K562 (cell line): ENCODE measurements at regions of chr1 and their contacts with region 1.

Region 1: GRCh38 chr1:202160377-202160940 is at the start of gene PTPN7:
- DNase-seq: peak; percentile 57 to 75 (median 68)
- ATAC-seq: peak; percentile 2; the same call in 1 of the 3 replicates
- H3K4me3 ChIP-seq: peak within 1 kb of the TSS; percentile 57
- H3K27ac ChIP-seq: peak within 1 kb of the TSS; percentile 99
- H3K4me1 ChIP-seq: peaks cover 81 to 87% of the 10 kb centered on the region in 2 experiments
- H3K27me3 ChIP-seq: no peaks in the 10 kb centered on the region
- CTCF ChIP-seq: peak; percentile 22 to 26 (median 25); a peak in 3 of 6 replicates
- EP300 ChIP-seq: no peak
- POLR2A ChIP-seq: no peak
- RAD21 ChIP-seq: peak in 1 of 2 experiments; percentile 25; a peak in 1 of 4 replicates
- polyA plus RNA-seq, gene PTPN7: 18.7 to 19.8 TPM

Region 2: DNA sequence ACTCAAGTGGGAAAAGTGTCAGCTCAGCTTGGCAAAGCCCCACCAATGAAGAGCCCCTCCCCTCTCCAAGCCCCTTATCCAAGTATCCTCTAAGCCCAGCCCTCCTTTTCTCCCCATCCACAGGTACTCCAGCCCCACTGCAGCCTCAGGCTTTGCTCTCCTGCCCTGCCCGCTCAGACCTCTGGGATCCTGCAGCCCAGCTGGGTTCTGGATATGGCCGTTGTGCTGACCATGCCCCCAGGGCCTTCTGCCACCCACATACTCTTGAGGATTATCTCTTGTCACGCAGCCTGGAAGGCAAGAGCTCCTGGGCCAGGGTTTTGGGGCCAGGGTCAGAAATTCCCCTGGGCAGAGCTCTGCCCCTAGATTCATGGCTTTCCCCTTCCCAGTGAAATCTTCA is 267.0 kb before region 1 on chr1:
- CTCF ChIA-PET with region 1: no interaction called
- POLR2A ChIA-PET with region 1: no interaction called
- in situ Hi-C with region 1: no loop called
- intact Hi-C with region 1: no loop called
- DNase-seq: no peak
- ATAC-seq: no peak
- H3K4me3 ChIP-seq: no peak overlapping the region
- H3K27ac ChIP-seq: no peak overlapping the region
- H3K4me1 ChIP-seq: peaks cover 3 to 15% of the 10 kb centered on the region in 2 experiments; a peak in 3 of 5 replicates
- H3K27me3 ChIP-seq: peaks cover 0 to 8% of the 10 kb centered on the region in 2 experiments; a peak in 1 of 5 replicates
- CTCF ChIP-seq: no peak
- EP300 ChIP-seq: no peak
- POLR2A ChIP-seq: no peak
- RAD21 ChIP-seq: no peak

Region 3: DNA sequence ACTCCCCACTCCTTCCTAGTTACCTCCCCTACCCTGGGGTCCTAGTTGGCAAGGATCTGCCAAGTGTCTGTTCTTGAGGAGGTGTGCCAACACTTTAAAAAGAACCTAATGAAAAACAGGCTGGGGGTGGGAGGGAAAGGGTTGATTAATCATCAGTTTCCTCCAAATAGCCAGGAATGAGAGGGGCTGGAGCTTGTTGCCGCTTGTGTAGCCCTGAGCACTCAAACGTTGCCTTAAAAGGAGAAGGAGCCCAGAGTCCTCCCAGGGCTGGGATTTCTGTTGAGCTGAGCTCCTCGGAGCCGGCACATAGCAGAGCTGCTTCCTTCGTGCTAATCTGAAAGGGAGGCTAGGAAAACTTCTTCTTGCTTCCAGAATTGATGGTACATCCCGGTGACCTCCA is 255.9 kb before region 1 on chr1:
- CTCF ChIA-PET with region 1: no interaction called
- POLR2A ChIA-PET with region 1: no interaction called
- in situ Hi-C with region 1: no loop called
- intact Hi-C with region 1: no loop called
- DNase-seq: no peak
- ATAC-seq: no peak
- H3K4me3 ChIP-seq: no peak overlapping the region
- H3K27ac ChIP-seq: no peak overlapping the region
- H3K4me1 ChIP-seq: peaks cover 0 to 2% of the 10 kb centered on the region in 2 experiments; a peak in 2 of 5 replicates
- H3K27me3 ChIP-seq: peaks cover 0 to 12% of the 10 kb centered on the region in 2 experiments; a peak in 3 of 5 replicates
- CTCF ChIP-seq: no peak
- EP300 ChIP-seq: no peak
- POLR2A ChIP-seq: no peak
- RAD21 ChIP-seq: no peak

Region 4: DNA sequence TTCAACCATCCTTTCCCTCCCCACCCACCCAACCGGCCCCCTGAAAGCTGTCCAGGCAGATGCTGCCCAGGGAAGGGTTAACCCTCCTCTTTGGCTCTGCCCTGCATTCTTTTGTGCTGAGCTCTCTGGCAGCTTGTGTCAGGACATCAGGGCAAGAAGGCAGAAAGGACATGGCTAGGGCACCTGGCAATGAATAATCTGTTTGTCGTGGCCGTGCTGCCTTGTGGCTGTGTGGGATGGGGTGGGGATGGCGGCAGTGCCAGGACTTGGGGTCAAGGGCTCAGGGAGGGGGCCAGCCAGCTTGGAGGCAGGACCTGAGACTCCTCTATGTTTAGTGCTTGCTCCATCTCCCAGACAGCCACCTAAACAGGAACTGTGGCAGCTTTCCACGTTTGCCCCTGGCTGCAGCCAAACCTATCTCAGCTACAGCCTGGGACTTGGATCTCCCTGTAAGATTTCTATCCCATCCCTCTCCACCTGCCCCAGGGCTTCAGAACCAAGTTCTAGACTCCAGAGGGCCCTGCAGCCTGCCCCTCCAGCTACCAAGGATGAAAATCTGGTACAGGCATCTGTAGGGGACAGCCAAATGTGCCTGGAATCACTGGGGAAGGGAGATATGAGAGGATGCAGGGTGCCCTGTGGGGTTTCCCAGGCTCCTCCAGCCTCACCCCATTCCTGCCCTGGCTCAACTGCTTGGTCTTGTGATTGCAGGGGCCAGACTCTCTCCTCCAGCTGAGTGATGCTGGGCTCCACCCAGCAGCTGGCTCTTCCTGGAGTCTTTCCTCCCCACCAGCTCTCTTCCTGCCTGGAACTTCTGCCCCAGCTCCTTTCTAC is 47.4 kb before region 1 on chr1:
- CTCF ChIA-PET with region 1: no interaction called
- POLR2A ChIA-PET with region 1: no interaction called
- in situ Hi-C with region 1: no loop called
- intact Hi-C with region 1: no loop called
- DNase-seq: no peak
- ATAC-seq: no peak
- H3K4me3 ChIP-seq: no peak overlapping the region
- H3K27ac ChIP-seq: no peak overlapping the region
- H3K4me1 ChIP-seq: peaks cover 5 to 10% of the 10 kb centered on the region in 2 experiments; a peak in 4 of 5 replicates
- H3K27me3 ChIP-seq: peaks cover 3 to 14% of the 10 kb centered on the region in 2 experiments; a peak in 3 of 5 replicates
- CTCF ChIP-seq: no peak
- EP300 ChIP-seq: no peak
- POLR2A ChIP-seq: no peak
- RAD21 ChIP-seq: no peak

Region 5: DNA sequence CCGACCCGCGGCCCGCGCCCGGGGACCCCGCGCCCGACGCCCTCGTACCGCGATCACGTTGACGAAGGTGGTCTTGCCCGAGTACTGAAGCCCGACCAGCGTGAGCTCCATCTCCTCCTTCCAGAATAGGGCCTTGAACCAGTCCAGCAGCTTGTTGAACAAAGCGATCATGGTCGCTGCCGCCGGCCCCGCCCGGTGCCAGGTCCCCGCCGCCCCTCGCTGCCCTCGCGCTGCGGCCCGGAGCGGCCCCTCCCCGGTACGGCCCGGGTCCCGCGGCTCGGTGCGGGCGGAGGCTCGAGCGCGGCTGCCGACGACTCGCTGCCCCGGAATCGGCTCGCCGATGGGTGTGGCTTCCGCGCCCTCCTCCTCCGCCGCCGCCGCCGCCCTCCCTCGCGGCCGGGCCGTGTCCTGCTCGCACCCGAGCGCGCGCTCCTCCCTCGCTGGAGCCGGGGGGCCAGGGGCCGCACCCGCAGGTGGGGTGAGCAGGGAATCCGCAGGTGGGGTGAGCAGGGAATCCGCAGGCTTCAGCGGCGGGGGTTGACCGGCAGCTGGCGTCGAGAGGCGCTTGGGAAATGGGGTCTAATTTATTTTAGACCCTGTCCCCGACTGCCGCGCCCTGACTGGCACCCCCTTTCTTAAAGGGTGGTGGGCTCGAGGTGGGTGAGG is 15.9 kb before region 1 on chr1 and contains the start of gene ARL8A:
- CTCF ChIA-PET with region 1: no interaction called
- POLR2A ChIA-PET with region 1: interaction called, 49 read pairs
- in situ Hi-C with region 1: no loop called
- intact Hi-C with region 1: no loop called
- DNase-seq: peak; percentile 81 to 92 (median 91)
- ATAC-seq: peak; percentile 86
- H3K4me3 ChIP-seq: peak within 1 kb of the TSS; percentile 80
- H3K27ac ChIP-seq: peak within 1 kb of the TSS; percentile 73
- H3K4me1 ChIP-seq: peaks cover 19 to 31% of the 10 kb centered on the region in 2 experiments; a peak in 4 of 5 replicates
- H3K27me3 ChIP-seq: no peaks in the 10 kb centered on the region
- CTCF ChIP-seq: no peak
- EP300 ChIP-seq: no peak
- POLR2A ChIP-seq: peak; percentile 54
- RAD21 ChIP-seq: no peak; a peak in 1 of 4 replicates
- polyA plus RNA-seq, gene ARL8A: 0.17 to 0.32 TPM

Region 6: DNA sequence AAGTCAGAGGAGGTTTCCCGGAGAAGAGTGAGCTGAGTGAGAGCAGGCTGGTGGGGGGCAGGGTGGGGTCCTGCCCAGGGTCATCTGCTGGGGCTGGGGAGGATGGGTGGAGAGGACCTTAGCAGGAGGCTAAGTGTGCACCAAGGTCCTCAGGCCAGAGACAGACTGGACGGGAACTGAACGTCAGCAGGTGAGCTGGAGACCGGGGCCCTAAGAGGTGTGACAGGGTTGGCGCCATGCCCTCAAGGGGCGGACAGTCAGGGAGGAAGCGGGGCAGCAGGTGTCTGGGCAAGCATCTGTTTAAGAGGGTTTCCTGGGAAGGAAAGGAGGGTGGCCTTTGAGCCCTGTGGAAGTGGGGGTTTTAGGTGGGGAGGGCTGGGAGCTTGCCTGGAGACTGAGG is 13.5 kb after region 1 on chr1:
- CTCF ChIA-PET with region 1: no interaction called
- POLR2A ChIA-PET with region 1: interaction called, 12 read pairs
- in situ Hi-C with region 1: no loop called
- intact Hi-C with region 1: no loop called
- DNase-seq: no peak
- ATAC-seq: no peak
- H3K4me3 ChIP-seq: no peak overlapping the region
- H3K27ac ChIP-seq: no peak overlapping the region
- H3K4me1 ChIP-seq: peaks cover 0 to 17% of the 10 kb centered on the region in 2 experiments; a peak in 2 of 5 replicates
- H3K27me3 ChIP-seq: no peaks in the 10 kb centered on the region
- CTCF ChIP-seq: no peak
- EP300 ChIP-seq: no peak
- POLR2A ChIP-seq: no peak
- RAD21 ChIP-seq: no peak